ENCODE measurements at regions of chr1 and their contacts with region 1.

Region 1: GRCh38 chr1:51058858-51059257 is 43.2 kb upstream of the C1orf185 start:
- DNase-seq: peak; percentile 59
- ATAC-seq: peak; percentile 99
- H3K4me3 ChIP-seq: peak overlapping the region in 2 of 3 experiments; percentile 6 to 59; a peak in 2 of 6 replicates
- H3K27ac ChIP-seq: no peak overlapping the region
- H3K4me1 ChIP-seq: no peaks in the 10 kb centered on the region; the same call in 1 of the 2 replicates
- H3K27me3 ChIP-seq: no peaks in the 10 kb centered on the region; a peak in 1 of 5 replicates
- CTCF ChIP-seq: peak; percentile 96
- EP300 ChIP-seq: no peak
- POLR2A ChIP-seq: no peak
- RAD21 ChIP-seq: peak; percentile 93

Region 2: GRCh38 chr1:50208315-50208714 is 850.5 kb before region 1 on chr1:
- CTCF ChIA-PET with region 1: no interaction called
- POLR2A ChIA-PET with region 1: no interaction called
- in situ Hi-C with region 1: no loop called
- intact Hi-C with region 1: no loop called
- DNase-seq: no peak
- ATAC-seq: no peak
- H3K4me3 ChIP-seq: no peak overlapping the region
- H3K27ac ChIP-seq: no peak overlapping the region
- H3K4me1 ChIP-seq: peaks cover 2% of the 10 kb centered on the region; the same call in 1 of the 2 replicates
- H3K27me3 ChIP-seq: peaks cover 0 to 2% of the 10 kb centered on the region in 2 experiments; a peak in 2 of 5 replicates
- CTCF ChIP-seq: no peak
- EP300 ChIP-seq: no peak
- POLR2A ChIP-seq: no peak
- RAD21 ChIP-seq: no peak

Region 3: GRCh38 chr1:50548243-50548642 is 510.6 kb before region 1 on chr1:
- CTCF ChIA-PET with region 1: no interaction called
- POLR2A ChIA-PET with region 1: no interaction called
- in situ Hi-C with region 1: no loop called
- intact Hi-C with region 1: loop called (anchors 5 kb)
- DNase-seq: no peak
- ATAC-seq: no peak
- H3K4me3 ChIP-seq: no peak overlapping the region
- H3K27ac ChIP-seq: no peak overlapping the region
- H3K4me1 ChIP-seq: peaks cover 1% of the 10 kb centered on the region
- H3K27me3 ChIP-seq: no peaks in the 10 kb centered on the region
- CTCF ChIP-seq: no peak
- EP300 ChIP-seq: no peak
- POLR2A ChIP-seq: no peak
- RAD21 ChIP-seq: no peak

Region 4: GRCh38 chr1:50750021-50750619 is 308.7 kb before region 1 on chr1:
- CTCF ChIA-PET with region 1: interaction called, 8 read pairs
- POLR2A ChIA-PET with region 1: no interaction called
- in situ Hi-C with region 1: no loop called
- intact Hi-C with region 1: loop called (anchors 2 kb)
- DNase-seq: peak; percentile 6
- ATAC-seq: no peak; the same call in 2 of the 3 replicates
- H3K4me3 ChIP-seq: no peak overlapping the region
- H3K27ac ChIP-seq: no peak overlapping the region
- H3K4me1 ChIP-seq: no peaks in the 10 kb centered on the region
- H3K27me3 ChIP-seq: no peaks in the 10 kb centered on the region
- CTCF ChIP-seq: peak; percentile 56
- EP300 ChIP-seq: no peak
- POLR2A ChIP-seq: no peak
- RAD21 ChIP-seq: no peak

Region 5: GRCh38 chr1:50873458-50874187 is 185.2 kb before region 1 on chr1:
- CTCF ChIA-PET with region 1: interaction called, 3 read pairs
- POLR2A ChIA-PET with region 1: no interaction called
- in situ Hi-C with region 1: no loop called
- intact Hi-C with region 1: loop called (anchors 2 kb)
- DNase-seq: peak; percentile 23
- ATAC-seq: no peak
- H3K4me3 ChIP-seq: no peak overlapping the region
- H3K27ac ChIP-seq: no peak overlapping the region
- H3K4me1 ChIP-seq: peaks cover 23% of the 10 kb centered on the region
- H3K27me3 ChIP-seq: no peaks in the 10 kb centered on the region
- CTCF ChIP-seq: peak; percentile 45
- EP300 ChIP-seq: no peak
- POLR2A ChIP-seq: no peak
- RAD21 ChIP-seq: no peak

Region 6: GRCh38 chr1:50968158-50968820 is 90.6 kb before region 1 on chr1:
- CTCF ChIA-PET with region 1: no interaction called
- POLR2A ChIA-PET with region 1: no interaction called
- in situ Hi-C with region 1: no loop called
- intact Hi-C with region 1: loop called (anchors 2 kb)
- DNase-seq: peak; percentile 76
- ATAC-seq: peak; percentile 89
- H3K4me3 ChIP-seq: peak overlapping the region; percentile 91 to 99 (median 98)
- H3K27ac ChIP-seq: peak overlapping the region; percentile 98
- H3K4me1 ChIP-seq: peaks cover 17% of the 10 kb centered on the region; the same call in 1 of the 2 replicates
- H3K27me3 ChIP-seq: no peaks in the 10 kb centered on the region; a peak in 1 of 5 replicates
- CTCF ChIP-seq: peak; percentile 73
- EP300 ChIP-seq: peak in 1 of 2 experiments; percentile 69; a peak in 2 of 4 replicates
- POLR2A ChIP-seq: peak; percentile 62 to 75
- RAD21 ChIP-seq: peak; percentile 64

Region 7: GRCh38 chr1:51139474-51139873 is 80.6 kb after region 1 on chr1:
- CTCF ChIA-PET with region 1: no interaction called
- POLR2A ChIA-PET with region 1: no interaction called
- in situ Hi-C with region 1: no loop called
- intact Hi-C with region 1: no loop called
- DNase-seq: no peak
- ATAC-seq: no peak
- H3K4me3 ChIP-seq: no peak overlapping the region
- H3K27ac ChIP-seq: no peak overlapping the region
- H3K4me1 ChIP-seq: no peaks in the 10 kb centered on the region
- H3K27me3 ChIP-seq: no peaks in the 10 kb centered on the region
- CTCF ChIP-seq: no peak
- EP300 ChIP-seq: no peak
- POLR2A ChIP-seq: no peak
- RAD21 ChIP-seq: no peak